Activated CD8-positive, alpha-beta T cell treated with anti-CD3 and anti-CD28 coated beads for 36 hours (primary cell): ENCODE measurements at regions of chr4 and their contacts with region 1.

Region 1: DNA sequence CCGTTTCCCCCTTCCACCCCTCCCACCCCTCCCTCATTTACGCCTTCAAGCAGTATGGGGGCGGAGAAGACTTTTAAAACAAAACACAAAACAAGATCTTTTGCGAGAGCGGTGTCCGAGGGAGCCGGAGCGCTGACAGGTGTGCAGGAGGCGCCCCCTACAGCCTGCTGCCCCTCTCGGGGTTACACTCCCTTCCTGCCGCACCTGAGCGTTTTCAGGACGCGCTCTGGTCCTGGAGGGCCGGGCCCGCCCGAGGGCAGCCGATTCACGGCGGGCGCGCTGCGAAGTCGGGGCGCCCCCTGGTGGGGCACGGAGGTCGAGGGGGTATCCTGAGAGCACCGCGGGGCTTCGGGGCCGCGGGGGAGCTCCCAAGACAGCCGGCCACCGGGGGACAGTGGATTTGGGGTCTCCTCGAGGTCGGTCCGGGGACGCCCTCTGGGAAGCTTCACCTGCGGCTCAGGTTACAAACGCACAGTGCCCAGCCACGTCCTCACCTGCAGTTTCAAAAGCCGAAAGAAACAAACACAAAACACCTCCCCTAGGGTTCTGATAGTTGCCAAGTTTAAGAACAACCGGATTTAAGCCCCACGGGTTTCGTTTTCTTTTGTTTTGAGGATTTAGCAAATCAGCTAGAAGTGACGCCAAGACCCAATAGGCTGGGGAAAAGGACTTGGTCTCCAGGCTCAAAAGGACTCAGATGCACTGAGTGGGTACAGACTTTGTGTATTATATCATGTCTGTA is 8.0 kb upstream of the NEUROG2 start:
- DNase-seq: peak; percentile 89
- ATAC-seq: peak; percentile 96
- H3K4me3 Mint-ChIP-seq: peak overlapping the region; percentile 71
- H3K27ac Mint-ChIP-seq: no peak overlapping the region
- H3K4me1 Mint-ChIP-seq: peaks cover 25% of the 10 kb centered on the region
- H3K27me3 Mint-ChIP-seq: peaks cover 49% of the 10 kb centered on the region
- CTCF ChIP-seq: peak; percentile 96

Region 2: DNA sequence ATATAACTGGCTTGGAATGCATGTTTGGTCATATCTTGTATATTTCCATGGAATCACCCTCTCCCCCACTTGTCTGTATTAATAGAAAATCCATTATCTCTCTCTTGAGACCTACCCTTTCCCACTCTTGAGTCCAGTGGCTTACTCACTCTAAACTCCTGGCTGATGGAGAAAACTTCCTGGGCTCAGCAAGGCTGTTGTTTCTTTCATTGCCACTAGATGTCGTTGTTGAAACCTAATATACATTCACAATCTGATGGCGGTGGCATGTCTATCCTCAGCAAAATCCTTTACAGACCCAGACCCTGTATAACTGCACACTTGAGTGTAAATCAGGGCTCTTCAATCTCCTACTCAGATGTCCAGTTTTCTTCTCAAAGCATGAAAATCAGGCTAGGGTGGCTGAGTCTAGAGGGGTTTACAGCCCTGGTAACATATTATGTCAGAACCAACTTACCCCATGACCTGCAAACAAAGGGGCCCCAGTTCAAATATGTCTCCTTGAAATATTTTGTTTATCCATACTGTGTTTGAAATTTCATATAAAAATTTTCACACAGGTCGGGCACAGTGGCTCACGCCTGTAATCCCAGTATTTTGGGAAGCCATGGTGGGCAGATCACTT is 448.7 kb before region 1 on chr4:
- CTCF ChIA-PET with region 1: interaction called, 3 read pairs
- POLR2A ChIA-PET with region 1: no interaction called
- intact Hi-C with region 1: loop called (anchors 10 kb)
- DNase-seq: peak; percentile 47
- ATAC-seq: peak; percentile 76
- H3K4me3 Mint-ChIP-seq: no peak overlapping the region
- H3K27ac Mint-ChIP-seq: no peak overlapping the region
- H3K4me1 Mint-ChIP-seq: no peaks in the 10 kb centered on the region
- H3K27me3 Mint-ChIP-seq: peaks cover 8% of the 10 kb centered on the region
- CTCF ChIP-seq: peak; percentile 77

Region 3: GRCh38 chr4:112099701-112100297 is 424.1 kb before region 1 on chr4:
- CTCF ChIA-PET with region 1: interaction called, 44 read pairs
- POLR2A ChIA-PET with region 1: no interaction called
- intact Hi-C with region 1: loop called (anchors 5 kb)
- DNase-seq: no peak
- ATAC-seq: peak; percentile 58
- H3K4me3 Mint-ChIP-seq: no peak overlapping the region
- H3K27ac Mint-ChIP-seq: no peak overlapping the region
- H3K4me1 Mint-ChIP-seq: peaks cover 3% of the 10 kb centered on the region
- H3K27me3 Mint-ChIP-seq: peaks cover 6% of the 10 kb centered on the region
- CTCF ChIP-seq: peak; percentile 72

Region 4: DNA sequence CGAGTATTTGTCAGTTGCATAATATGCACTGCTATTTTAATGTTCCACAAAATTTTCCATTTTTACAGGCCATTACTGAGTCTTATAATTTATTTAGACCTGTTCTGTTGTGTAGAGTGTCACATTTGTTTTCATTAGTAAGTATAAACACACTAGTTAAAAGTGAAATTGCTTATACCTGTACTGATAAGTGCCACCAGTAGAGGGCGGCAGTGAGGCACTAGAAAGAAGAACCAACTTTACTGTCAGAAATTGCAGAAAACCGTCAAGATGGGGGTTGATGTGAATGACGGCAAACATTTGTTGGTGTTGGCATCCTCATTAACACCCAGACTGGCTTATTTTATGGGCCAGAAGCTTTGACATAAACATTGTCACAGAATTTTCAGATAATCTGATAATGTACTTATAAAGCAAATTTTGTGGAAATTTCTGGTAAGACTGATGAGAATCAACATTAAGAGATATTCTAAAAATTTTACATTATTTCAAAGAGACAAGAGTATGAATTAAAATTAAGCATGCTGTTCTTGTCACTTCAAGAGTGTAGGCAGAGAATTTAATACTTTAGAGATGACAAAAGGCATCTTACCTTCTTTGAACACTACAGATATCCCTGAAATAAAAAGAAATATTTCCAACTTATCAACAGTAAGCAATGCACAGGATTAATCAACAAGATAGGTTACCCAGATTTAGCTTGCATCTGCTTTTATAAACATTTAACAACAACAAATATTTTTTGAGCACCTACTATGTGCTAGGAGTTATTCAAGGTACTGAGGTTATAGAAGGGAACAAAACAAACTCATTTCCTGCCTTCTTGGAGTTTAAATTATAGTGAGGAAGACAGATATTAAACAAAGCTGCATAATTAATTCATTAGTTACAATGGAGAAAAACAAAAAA is 201.9 kb before region 1 on chr4:
- CTCF ChIA-PET with region 1: interaction called, 45 read pairs
- POLR2A ChIA-PET with region 1: no interaction called
- intact Hi-C with region 1: no loop called
- DNase-seq: peak; percentile 92
- ATAC-seq: peak; percentile 92
- H3K4me3 Mint-ChIP-seq: no peak overlapping the region
- H3K27ac Mint-ChIP-seq: no peak overlapping the region
- H3K4me1 Mint-ChIP-seq: peaks cover 10% of the 10 kb centered on the region
- H3K27me3 Mint-ChIP-seq: no peaks in the 10 kb centered on the region
- CTCF ChIP-seq: peak; percentile 96

Region 5: DNA sequence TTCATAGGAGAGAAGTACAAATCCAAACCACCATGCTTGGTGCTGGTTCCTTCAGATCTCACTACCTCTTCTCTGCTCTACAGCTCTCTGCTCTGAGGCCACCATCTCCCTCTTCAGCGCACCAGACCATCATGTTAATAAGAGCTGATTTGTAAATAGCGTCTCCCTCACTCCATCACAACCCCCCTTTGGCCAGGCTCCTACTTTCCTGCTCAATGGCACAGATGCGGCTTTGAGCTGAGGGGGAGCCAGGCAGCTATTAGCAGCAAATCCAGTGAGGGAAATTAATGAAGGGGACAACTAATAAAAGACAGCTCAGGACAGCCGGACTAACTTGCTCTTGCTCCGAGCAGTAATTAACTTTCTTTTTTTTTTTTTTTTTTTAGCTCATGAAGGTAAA is 21.1 kb before region 1 on chr4:
- CTCF ChIA-PET with region 1: interaction called, 65 read pairs
- POLR2A ChIA-PET with region 1: no interaction called
- intact Hi-C with region 1: no loop called
- DNase-seq: no peak
- ATAC-seq: no peak
- H3K4me3 Mint-ChIP-seq: no peak overlapping the region
- H3K27ac Mint-ChIP-seq: no peak overlapping the region
- H3K4me1 Mint-ChIP-seq: no peaks in the 10 kb centered on the region
- H3K27me3 Mint-ChIP-seq: peaks cover 40% of the 10 kb centered on the region
- CTCF ChIP-seq: no peak

Region 6: GRCh38 chr4:112540695-112541094 is 16.8 kb after region 1 on chr4:
- CTCF ChIA-PET with region 1: interaction called, 13 read pairs
- POLR2A ChIA-PET with region 1: no interaction called
- intact Hi-C with region 1: no loop called
- DNase-seq: no peak
- ATAC-seq: no peak
- H3K4me3 Mint-ChIP-seq: no peak overlapping the region
- H3K27ac Mint-ChIP-seq: no peak overlapping the region
- H3K4me1 Mint-ChIP-seq: no peaks in the 10 kb centered on the region
- H3K27me3 Mint-ChIP-seq: no peaks in the 10 kb centered on the region
- CTCF ChIP-seq: no peak